ENCODE measurements at regions of chr3 and their contacts with region 1.

Region 1: DNA sequence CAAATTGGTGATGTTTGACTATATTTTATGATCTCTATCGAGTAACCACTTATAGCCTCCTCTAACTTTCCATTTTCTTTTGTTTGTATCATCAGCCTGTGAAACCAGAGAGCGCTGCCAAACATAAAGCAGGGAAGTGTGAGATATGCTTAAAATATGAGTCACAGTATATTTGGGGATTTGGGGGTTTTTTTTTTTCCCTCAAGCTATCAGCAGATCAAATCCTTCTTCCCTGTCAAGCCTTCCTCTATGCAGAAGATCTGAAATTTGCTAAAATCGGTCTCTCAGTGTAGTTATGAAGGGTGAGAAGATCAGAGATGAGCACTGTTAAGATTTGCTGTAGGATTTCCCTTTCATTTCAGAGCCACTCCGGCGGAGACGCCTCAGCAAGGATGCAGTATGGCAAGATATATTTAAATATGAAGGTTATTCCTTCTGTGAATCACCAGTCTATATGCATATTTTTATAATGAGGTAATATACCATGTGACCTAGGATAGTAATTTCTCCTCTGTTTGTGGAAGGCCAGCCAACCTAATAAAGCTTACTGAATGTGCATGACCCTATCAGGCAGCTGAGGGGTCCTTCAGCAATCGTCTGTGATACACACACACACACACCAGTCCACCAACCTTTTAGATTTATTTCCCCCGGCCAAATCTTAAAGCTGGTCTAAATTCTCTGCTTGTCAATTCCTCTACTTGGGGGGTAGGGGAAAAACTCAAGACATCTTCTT is 474.1 kb downstream of the FOXP1 start:
- DNase-seq: peak; percentile 86
- ATAC-seq: peak; percentile 56
- H3K4me3 ChIP-seq: peak overlapping the region; percentile 63
- H3K27ac ChIP-seq: peak overlapping the region; percentile 92
- H3K4me1 ChIP-seq: peaks cover 56% of the 10 kb centered on the region
- H3K27me3 ChIP-seq: no peaks in the 10 kb centered on the region
- CTCF ChIP-seq: no peak

Region 2: GRCh38 chr3:71057526-71057894 is 51.9 kb before region 1 on chr3:
- CTCF ChIA-PET with region 1: no interaction called
- POLR2A ChIA-PET with region 1: no interaction called
- intact Hi-C with region 1: loop called (anchors 2 kb)
- DNase-seq: peak; percentile 87
- ATAC-seq: peak; percentile 41
- H3K4me3 ChIP-seq: peak overlapping the region; percentile 58
- H3K27ac ChIP-seq: peak overlapping the region; percentile 93
- H3K4me1 ChIP-seq: peaks cover 84% of the 10 kb centered on the region
- H3K27me3 ChIP-seq: no peaks in the 10 kb centered on the region
- CTCF ChIP-seq: no peak

Region 3: DNA sequence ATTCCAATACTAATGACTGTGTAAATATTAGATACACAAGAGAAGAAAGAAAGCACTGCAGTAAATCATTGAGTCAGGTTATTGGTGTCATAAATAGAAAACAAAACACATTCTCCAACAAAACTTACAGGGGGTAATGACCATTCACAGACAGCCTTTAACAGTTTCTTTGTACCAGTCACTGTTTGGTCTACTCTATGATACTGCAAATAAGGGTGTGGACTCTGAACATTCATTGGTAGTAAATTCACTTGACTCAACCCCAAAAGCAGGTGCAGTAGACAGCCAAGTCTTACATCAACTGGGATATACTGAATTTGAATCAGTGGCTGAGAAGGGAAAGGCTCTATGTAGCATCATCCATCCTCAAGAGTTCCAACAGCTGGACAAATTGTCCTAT is 10.6 kb after region 1 on chr3:
- CTCF ChIA-PET with region 1: no interaction called
- POLR2A ChIA-PET with region 1: interaction called, 5 read pairs
- intact Hi-C with region 1: loop called (anchors 1 kb)
- DNase-seq: peak; percentile 57
- ATAC-seq: peak; percentile 75
- H3K4me3 ChIP-seq: no peak overlapping the region
- H3K27ac ChIP-seq: peak overlapping the region; percentile 33
- H3K4me1 ChIP-seq: peaks cover 39% of the 10 kb centered on the region
- H3K27me3 ChIP-seq: no peaks in the 10 kb centered on the region
- CTCF ChIP-seq: no peak

Region 4: GRCh38 chr3:71142440-71143161 is 33.2 kb after region 1 on chr3:
- CTCF ChIA-PET with region 1: no interaction called
- POLR2A ChIA-PET with region 1: no interaction called
- intact Hi-C with region 1: no loop called
- DNase-seq: no peak
- ATAC-seq: no peak
- H3K4me3 ChIP-seq: no peak overlapping the region
- H3K27ac ChIP-seq: no peak overlapping the region
- H3K4me1 ChIP-seq: no peaks in the 10 kb centered on the region
- H3K27me3 ChIP-seq: no peaks in the 10 kb centered on the region
- CTCF ChIP-seq: no peak

Region 5: DNA sequence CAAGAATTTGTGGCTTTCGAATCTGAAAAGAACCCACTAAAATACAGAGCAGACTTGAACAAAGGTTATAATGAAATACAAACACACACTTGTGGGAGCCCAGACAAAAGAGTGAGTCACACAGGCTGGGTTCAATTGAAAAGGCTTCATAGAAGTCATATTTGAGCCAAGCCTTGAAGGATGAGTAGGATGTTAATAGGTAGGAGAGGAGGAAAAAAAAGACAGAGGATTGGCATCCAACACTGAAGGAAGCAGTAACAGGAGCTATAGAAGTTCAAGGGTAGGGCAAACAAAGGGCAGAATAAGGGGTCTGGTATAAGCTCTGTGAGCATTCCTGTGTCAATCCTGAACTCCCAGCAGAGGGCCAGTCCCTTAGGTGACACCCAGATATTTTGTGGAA is 148.7 kb after region 1 on chr3:
- CTCF ChIA-PET with region 1: no interaction called
- POLR2A ChIA-PET with region 1: no interaction called
- intact Hi-C with region 1: loop called (anchors 5 kb)
- DNase-seq: peak; percentile 86
- ATAC-seq: peak; percentile 88
- H3K4me3 ChIP-seq: no peak overlapping the region
- H3K27ac ChIP-seq: peak overlapping the region; percentile 47
- H3K4me1 ChIP-seq: peaks cover 32% of the 10 kb centered on the region
- H3K27me3 ChIP-seq: no peaks in the 10 kb centered on the region
- CTCF ChIP-seq: no peak